Endothelial cell of umbilical vein (primary cell): ENCODE measurements at regions of chr5 and their contacts with region 1.

Region 1: DNA sequence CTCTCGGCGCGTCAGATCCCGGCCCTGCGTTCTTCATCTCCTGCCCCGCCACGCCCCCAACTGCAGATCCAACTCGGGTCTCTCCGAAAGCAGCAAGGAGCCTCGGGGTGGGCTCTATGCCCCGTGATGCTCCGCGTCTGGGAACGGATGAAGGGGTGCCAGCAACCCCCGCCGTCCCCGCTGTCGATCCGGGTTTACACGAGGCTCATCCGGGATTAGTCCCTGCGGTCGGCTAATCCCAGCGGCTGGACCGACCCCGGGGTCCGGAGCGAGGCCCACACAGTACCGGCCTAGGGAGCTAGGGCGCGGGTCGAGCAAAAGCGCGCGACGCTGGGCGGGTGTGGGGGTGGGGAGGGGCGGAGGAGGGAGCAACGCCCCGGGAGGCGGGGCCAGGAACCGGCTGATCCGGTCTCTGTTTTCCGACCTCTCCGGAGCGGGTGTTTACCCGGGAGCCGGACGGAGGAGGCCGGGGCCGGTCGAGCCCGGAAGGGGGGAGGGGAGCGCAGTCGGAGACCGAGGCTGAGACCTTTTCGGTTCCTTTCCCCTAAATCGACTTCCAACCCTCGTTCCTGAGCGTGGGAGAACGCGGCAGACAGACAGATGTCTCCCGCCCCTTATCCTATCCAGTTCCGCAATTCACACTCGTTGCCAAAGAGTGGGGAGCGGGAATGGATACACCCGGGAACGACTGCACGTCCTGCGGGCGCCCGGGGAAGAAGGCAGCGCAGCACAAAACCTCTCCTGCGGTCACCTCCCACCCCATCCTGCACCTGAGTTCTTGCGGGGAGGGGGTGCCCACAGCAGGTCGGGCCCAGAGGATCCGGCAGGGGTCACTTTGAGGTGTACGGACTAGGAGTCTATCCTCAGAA is 28.6 kb downstream of the PCDH1 start:
- DNase-seq: peak; percentile 87
- H3K4me3 ChIP-seq: peak overlapping the region; percentile 17 to 32 (median 31)
- H3K27ac ChIP-seq: peak overlapping the region; percentile 94
- H3K4me1 ChIP-seq: peaks cover 47% of the 10 kb centered on the region
- H3K27me3 ChIP-seq: no peaks in the 10 kb centered on the region
- CTCF ChIP-seq: no peak
- POLR2A ChIP-seq: peak; percentile 61

Region 2: DNA sequence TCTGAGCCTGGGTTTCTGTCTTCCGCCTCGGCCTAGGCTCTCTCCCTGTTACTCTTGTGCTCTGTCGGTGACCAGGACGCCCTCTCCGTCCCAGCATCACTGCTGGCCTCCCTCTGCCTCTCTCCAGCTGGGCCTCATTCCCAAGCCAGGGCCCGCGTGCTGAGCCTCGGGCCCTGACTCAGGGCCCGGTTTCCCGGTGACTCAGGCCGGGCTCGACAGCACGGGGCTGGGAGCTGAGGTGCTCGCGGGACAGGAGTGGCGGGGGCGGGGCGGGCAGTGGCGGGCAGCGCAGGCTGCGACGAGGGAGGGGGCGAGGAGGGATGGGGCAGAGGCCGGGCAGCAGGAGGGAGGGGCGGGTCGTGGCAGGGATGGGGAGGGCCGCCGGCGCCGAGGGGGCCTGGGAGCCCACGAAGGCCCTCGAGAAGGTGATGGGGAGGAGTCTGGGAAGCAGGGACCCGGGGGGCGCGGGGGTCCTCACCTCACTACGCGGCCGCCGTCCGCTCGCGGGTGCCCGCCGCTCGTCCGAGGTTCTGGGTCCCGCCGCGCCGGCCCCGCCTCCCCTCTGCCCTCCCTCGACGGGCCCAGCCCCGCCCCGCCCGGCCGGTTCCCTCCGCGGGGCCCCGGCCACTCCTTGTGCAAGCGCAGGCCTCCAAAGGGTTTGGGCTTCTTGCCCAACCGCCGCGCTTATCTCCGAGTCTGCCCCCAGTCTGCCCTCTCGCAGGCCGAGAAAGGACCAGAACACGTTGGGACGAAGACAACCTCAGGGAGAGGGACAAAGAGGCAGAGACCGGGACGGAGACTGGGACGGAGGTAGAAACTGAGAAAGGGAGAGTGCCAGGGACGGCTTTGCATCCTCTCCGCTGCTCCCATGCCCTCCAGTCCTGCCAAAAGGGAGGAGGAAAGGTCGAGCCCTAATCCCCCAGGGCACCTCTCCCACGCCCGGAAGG is 167.6 kb before region 1 on chr5 and contains the start of gene ARAP3:
- CTCF ChIA-PET with region 1: no interaction called
- POLR2A ChIA-PET with region 1: no interaction called
- dilution Hi-C with region 1: no loop called
- intact Hi-C with region 1: loop called (anchors 1 kb)
- DNase-seq: peak; percentile 92
- H3K4me3 ChIP-seq: peak within 1 kb of the TSS; percentile 5 to 69 (median 45)
- H3K27ac ChIP-seq: peak within 1 kb of the TSS; percentile 100
- H3K4me1 ChIP-seq: peaks cover 62% of the 10 kb centered on the region
- H3K27me3 ChIP-seq: no peaks in the 10 kb centered on the region
- CTCF ChIP-seq: no peak
- POLR2A ChIP-seq: peak; percentile 56
- total RNA-seq, gene ARAP3: 136 and 142 TPM in 2 replicates

Region 3: GRCh38 chr5:141805874-141806595 is 43.6 kb before region 1 on chr5:
- CTCF ChIA-PET with region 1: interaction called, 3 read pairs
- POLR2A ChIA-PET with region 1: interaction called, 3 read pairs
- dilution Hi-C with region 1: no loop called
- intact Hi-C with region 1: loop called (anchors 1 kb)
- DNase-seq: peak; percentile 86
- H3K4me3 ChIP-seq: no peak overlapping the region
- H3K27ac ChIP-seq: peak overlapping the region; percentile 81
- H3K4me1 ChIP-seq: peaks cover 25% of the 10 kb centered on the region
- H3K27me3 ChIP-seq: peaks cover 0 to 1% of the 10 kb centered on the region in 2 experiments
- CTCF ChIP-seq: no peak
- POLR2A ChIP-seq: no peak

Region 4: DNA sequence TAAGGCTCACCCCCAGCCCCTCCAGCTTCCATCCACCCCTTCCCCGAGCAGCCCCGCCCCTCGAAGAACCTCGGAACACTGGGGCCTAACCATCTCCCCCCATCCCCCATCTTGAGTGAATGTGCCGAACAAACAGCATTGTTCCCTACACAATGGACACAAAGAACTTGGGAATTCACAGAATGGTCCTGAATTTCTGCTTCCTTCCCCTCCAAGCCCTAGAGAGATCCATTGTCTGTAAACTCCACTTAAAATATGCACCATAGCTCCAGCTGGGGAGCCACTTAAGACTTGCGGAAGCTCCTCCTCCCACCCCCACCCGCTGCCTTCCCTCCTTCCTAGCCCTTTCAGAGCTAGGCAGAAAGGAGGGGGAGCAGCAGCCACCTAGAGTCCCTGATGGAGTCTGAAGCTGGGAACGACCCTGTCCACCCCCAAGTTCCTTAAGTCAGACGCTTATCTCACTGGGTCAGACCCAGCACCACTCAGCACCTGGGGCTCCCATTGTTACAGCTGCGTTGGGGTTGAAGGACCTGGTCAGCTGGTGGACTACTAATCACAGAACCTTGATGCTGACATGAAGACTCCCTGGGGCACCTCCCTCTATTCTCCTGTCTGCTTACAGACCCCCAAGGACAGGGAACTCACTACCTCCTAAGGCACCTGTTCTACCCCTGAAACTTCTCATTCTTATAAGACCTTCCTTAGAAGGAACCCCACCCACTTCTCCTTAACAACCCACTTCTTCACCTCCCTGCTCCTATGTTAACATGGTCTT is 32.8 kb before region 1 on chr5:
- CTCF ChIA-PET with region 1: interaction called, 6 read pairs
- POLR2A ChIA-PET with region 1: interaction called, 3 read pairs
- dilution Hi-C with region 1: no loop called
- intact Hi-C with region 1: loop called (anchors 1 kb)
- DNase-seq: peak; percentile 81
- H3K4me3 ChIP-seq: no peak overlapping the region
- H3K27ac ChIP-seq: peak overlapping the region; percentile 74
- H3K4me1 ChIP-seq: peaks cover 24% of the 10 kb centered on the region
- H3K27me3 ChIP-seq: no peaks in the 10 kb centered on the region
- CTCF ChIP-seq: no peak
- POLR2A ChIP-seq: no peak

Region 5: GRCh38 chr5:141825791-141826560 is 23.6 kb before region 1 on chr5:
- CTCF ChIA-PET with region 1: interaction called, 5 read pairs
- POLR2A ChIA-PET with region 1: no interaction called
- dilution Hi-C with region 1: no loop called
- intact Hi-C with region 1: loop called (anchors 1 kb)
- DNase-seq: no peak
- H3K4me3 ChIP-seq: no peak overlapping the region
- H3K27ac ChIP-seq: no peak overlapping the region
- H3K4me1 ChIP-seq: peaks cover 14% of the 10 kb centered on the region
- H3K27me3 ChIP-seq: no peaks in the 10 kb centered on the region
- CTCF ChIP-seq: peak; percentile 15 to 25
- POLR2A ChIP-seq: no peak

Region 6: GRCh38 chr5:141835928-141836670 is 13.5 kb before region 1 on chr5:
- CTCF ChIA-PET with region 1: interaction called, 8 read pairs
- POLR2A ChIA-PET with region 1: interaction called, 5 read pairs
- dilution Hi-C with region 1: no loop called
- intact Hi-C with region 1: loop called (anchors 1 kb)
- DNase-seq: peak; percentile 87
- H3K4me3 ChIP-seq: no peak overlapping the region
- H3K27ac ChIP-seq: peak overlapping the region; percentile 78
- H3K4me1 ChIP-seq: peaks cover 66% of the 10 kb centered on the region
- H3K27me3 ChIP-seq: no peaks in the 10 kb centered on the region
- CTCF ChIP-seq: no peak
- POLR2A ChIP-seq: no peak

Region 7: DNA sequence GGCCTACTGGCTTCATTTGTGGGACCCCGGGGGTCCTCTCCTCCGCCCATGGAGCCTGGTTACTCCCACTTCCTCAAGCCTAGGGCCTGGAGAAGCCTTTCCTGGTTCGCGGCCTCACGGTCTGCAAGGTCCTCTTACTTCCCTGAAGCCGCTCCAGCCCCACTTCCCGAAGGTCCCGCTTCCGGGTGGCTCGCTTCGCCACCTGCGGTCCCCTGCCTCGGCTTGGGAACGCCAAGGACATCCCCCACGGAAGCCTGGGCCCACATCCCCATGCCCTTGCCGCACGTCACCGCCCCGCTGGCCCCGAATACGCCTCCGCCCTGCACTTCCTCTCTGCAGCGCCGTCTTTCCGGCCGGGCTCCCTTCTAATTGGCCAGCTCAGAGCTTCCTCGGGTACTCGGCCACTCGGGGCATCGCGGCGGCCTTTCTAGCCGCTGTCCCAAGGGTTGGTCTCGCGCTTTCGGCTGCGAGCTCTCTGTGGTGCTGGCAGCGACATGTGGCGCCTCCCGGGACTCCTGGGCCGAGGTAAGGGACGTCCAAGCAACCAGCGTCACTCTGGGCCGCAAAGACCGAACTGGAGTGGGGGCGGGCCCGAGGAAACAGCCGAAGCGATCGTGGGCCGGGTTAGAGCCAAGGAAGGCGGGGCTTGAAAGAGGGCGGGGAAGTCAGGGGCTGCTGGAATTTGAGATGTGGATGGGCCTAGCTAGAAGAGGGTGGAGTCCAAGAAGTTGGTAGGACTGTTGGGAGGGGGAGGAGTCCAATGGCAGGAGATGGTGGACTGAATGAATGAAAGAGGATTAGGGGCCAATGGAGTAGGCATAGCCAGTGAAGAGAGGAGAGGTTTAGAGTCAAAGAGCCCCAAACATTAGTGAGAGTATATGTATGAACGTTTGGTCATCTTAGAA is 74.1 kb after region 1 on chr5 and contains the start of gene DELE1:
- CTCF ChIA-PET with region 1: no interaction called
- POLR2A ChIA-PET with region 1: no interaction called
- dilution Hi-C with region 1: no loop called
- intact Hi-C with region 1: loop called (anchors 2 kb)
- DNase-seq: peak; percentile 95
- H3K4me3 ChIP-seq: peak within 1 kb of the TSS; percentile 28 to 63 (median 47)
- H3K27ac ChIP-seq: peak within 1 kb of the TSS; percentile 84
- H3K4me1 ChIP-seq: peaks cover 15% of the 10 kb centered on the region
- H3K27me3 ChIP-seq: no peaks in the 10 kb centered on the region
- CTCF ChIP-seq: no peak
- POLR2A ChIP-seq: peak; percentile 76
- total RNA-seq, gene DELE1: 67.0 and 105 TPM in 2 replicates